ENCODE measurements at regions of chr7 and their contacts with region 1.

Region 1: DNA sequence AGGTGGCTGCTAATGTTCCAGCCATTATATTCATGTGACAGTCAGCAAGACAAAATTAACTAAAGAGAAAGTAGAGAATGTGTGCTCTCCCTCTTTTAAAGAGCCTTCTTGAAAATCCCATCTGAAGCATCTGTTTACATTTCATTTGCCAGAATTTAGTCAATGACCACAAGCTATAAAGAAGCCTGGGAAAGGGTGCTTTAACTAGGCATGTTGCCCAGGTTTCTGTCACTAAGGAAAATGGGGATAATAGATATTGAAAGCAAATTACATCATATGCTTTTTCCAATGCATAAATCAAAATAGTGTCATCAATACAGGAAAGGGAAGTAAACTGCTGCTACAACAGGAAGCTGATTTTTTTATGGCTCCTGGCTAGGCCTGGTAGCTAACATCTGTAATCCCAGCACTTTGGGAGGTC is 67.7 kb downstream of the ELAPOR2 start:
- DNase-seq: no peak
- CTCF ChIP-seq: no peak

Region 2: DNA sequence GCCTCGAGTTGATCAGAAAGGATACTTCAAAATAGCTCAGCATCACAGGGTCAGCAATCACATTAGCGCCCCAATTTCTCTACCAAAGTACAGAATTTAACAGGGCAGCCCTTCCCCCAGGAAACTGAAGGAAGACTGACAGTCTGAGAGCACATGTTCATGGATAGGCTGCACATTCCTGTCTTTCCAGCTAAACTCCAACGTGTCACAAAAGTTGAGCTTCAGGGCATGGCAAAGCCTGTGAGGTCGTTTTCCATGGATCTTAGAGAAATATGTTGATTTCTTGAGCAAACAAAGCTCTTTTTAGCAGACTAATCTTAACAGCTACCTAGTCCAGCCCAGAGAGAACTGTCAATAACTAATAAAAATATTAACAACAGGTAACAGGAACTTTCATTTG is 140.2 kb before region 1 on chr7:
- CTCF ChIA-PET with region 1: no interaction called
- POLR2A ChIA-PET with region 1: no interaction called
- DNase-seq: no peak
- CTCF ChIP-seq: no peak

Region 3: DNA sequence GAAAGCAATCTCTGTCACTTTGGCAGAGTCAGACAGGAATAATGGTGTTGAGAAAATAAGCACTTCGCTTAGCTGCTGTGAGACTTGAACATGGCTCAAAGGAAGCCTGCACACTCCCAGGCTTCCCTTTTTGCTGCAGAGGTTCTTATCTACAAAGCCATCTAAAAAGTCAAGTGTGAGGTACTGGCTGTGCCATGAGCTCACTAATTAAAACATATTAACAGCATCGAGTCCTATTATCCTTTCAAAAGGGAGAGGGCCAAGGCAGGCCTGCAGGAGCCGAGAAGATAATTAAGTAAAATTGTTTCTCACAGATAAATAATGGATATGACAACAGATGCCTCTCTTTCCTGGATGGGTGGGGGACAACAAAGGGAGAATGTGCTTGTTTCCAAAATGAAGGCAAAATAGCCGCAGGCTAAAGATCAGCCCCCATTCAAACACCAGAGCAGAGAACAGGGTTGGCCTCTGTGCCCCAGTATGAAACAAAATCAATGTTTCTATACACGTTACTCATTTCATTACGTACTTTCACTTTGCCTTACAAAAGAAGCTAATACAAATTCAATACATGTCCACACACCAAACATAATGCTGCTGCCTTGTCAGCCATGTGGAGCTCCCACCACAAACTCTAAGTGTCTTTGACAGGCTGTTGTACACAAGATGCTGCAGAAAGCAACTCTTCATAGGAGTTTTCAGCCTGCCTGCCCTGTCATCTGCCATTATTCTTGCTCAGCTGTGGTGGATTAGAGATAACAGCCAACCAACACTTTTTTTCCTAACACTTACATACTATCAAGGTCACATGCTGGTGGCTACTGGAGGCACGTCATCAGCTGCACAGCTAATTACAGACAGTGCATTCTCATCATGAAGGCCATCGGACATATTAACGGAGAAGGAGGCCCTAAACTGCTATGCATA is 12.4 kb after region 1 on chr7:
- CTCF ChIA-PET with region 1: interaction called, 19 read pairs
- POLR2A ChIA-PET with region 1: no interaction called
- DNase-seq: no peak
- CTCF ChIP-seq: no peak